WTC11 (cell line): ENCODE measurements at regions of chr20 and their contacts with region 1.

Region 1: DNA sequence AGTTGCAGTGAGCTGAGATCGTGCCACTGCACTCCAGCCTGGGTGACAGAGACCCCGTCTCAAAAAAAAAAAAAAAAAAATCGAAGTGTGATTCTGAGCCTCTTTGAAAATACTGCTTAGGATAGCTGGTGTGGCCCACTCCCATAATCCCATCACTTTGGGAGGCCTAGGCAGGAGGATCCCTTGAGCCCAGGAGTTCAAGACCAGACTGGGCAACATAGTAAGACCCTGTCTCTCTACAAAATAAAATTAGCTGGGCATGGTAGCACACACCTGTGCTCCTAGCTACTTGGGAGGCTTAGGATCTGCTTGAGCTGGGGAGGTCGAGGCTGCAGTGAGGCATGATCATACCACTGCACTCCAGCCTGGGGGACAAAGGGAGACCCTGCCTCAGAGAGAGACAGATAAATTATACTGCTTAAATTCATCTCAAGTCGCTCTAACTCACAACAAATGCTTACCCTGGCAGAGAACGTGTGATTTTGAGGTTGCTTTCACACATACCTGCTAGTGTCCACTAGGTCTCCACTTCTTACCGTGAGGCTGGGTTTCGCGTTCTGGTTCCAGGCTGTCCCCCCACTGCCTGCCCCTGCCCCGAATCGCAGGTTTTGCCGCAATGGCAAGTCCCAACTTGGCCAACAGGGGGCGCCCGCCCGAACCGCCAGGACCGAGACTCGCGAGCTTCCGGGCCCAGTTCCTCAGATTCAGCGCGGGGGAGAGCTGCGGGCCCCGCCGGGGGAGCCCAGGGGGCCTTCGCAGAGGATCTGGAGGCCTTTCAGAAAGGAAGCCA is 12.3 kb upstream of the TMC2 start:
- DNase-seq: peak; percentile 95
- ATAC-seq: peak; percentile 81
- H3K4me3 Mint-ChIP-seq: peak overlapping the region; percentile 91
- H3K27ac Mint-ChIP-seq: no peak overlapping the region
- H3K4me1 Mint-ChIP-seq: peaks cover 3% of the 10 kb centered on the region
- H3K27me3 Mint-ChIP-seq: peaks cover 88% of the 10 kb centered on the region
- CTCF ChIP-seq: peak; percentile 98

Region 2: GRCh38 chr20:2429061-2429460 is 95.1 kb before region 1 on chr20:
- CTCF ChIA-PET with region 1: no interaction called
- POLR2A ChIA-PET with region 1: no interaction called
- DNase-seq: no peak
- ATAC-seq: no peak
- H3K4me3 Mint-ChIP-seq: no peak overlapping the region
- H3K27ac Mint-ChIP-seq: no peak overlapping the region
- H3K4me1 Mint-ChIP-seq: no peaks in the 10 kb centered on the region
- H3K27me3 Mint-ChIP-seq: no peaks in the 10 kb centered on the region
- CTCF ChIP-seq: no peak

Region 3: GRCh38 chr20:2470423-2471193 is 53.5 kb before region 1 on chr20 and contains the start of gene SNRPB:
- CTCF ChIA-PET with region 1: interaction called, 14 read pairs
- POLR2A ChIA-PET with region 1: interaction called, 6 read pairs
- DNase-seq: peak; percentile 95
- ATAC-seq: peak; percentile 99
- H3K4me3 Mint-ChIP-seq: peak within 1 kb of the TSS; percentile 99
- H3K27ac Mint-ChIP-seq: peak within 1 kb of the TSS; percentile 100
- H3K4me1 Mint-ChIP-seq: peaks cover 38% of the 10 kb centered on the region
- H3K27me3 Mint-ChIP-seq: no peaks in the 10 kb centered on the region; the same call in 1 of the 2 replicates
- CTCF ChIP-seq: no peak
- total RNA-seq, gene SNRPB: 489 to 539 TPM (median 498 TPM) in 3 replicates

Region 4: GRCh38 chr20:2508631-2509467 is 15.3 kb before region 1 on chr20 and contains the start of gene ZNF343:
- CTCF ChIA-PET with region 1: interaction called, 27 read pairs
- POLR2A ChIA-PET with region 1: interaction called, 3 read pairs
- DNase-seq: peak; percentile 72
- ATAC-seq: peak; percentile 93
- H3K4me3 Mint-ChIP-seq: peak within 1 kb of the TSS; percentile 100
- H3K27ac Mint-ChIP-seq: peak within 1 kb of the TSS; percentile 91
- H3K4me1 Mint-ChIP-seq: peaks cover 7% of the 10 kb centered on the region
- H3K27me3 Mint-ChIP-seq: peaks cover 42% of the 10 kb centered on the region
- CTCF ChIP-seq: no peak
- total RNA-seq, gene ZNF343: 5.0 to 7.6 TPM (median 6.3 TPM) in 3 replicates

Region 5: DNA sequence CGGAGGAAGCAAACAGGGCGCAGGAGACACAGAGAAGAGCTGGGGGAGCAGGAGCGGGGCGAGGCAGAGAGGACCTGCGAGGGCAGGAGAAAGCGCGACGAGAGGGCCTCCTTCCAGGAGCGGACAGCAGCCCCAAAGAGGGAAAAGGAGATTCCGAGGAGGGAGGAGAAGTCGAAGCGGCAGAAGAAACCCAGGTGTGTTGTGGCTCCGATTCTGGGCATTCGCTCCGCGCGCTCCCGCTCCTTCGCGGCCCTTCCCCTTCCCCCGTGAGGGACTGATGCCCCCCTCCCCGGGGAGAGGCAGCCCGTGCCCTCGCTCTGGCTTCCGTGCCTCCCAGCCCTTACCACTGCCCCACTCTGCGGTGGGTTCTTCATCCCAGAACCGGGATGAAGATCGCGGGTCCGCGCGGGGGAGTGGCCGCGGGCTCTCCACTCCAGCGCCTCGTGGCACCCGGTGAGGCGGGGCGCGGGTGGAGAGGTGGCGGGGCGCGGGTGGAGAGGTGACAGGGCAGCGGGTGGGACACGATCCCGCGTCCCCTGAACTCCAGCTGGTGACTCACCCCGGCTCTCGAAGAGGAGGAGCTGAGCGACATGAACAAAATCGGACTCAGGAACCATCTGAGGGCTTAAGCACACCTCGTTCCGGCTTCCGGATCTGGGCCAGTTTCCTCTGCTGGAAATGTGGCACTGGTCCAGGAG is 34.6 kb after region 1 on chr20:
- CTCF ChIA-PET with region 1: interaction called, 10 read pairs
- POLR2A ChIA-PET with region 1: no interaction called
- DNase-seq: peak; percentile 24
- ATAC-seq: peak; percentile 66
- H3K4me3 Mint-ChIP-seq: peak overlapping the region; percentile 66
- H3K27ac Mint-ChIP-seq: no peak overlapping the region
- H3K4me1 Mint-ChIP-seq: peaks cover 7% of the 10 kb centered on the region
- H3K27me3 Mint-ChIP-seq: peaks cover 78% of the 10 kb centered on the region
- CTCF ChIP-seq: no peak

Region 6: GRCh38 chr20:2671977-2672376 is 147.9 kb after region 1 on chr20:
- CTCF ChIA-PET with region 1: interaction called, 11 read pairs
- POLR2A ChIA-PET with region 1: no interaction called
- DNase-seq: peak; percentile 66
- ATAC-seq: peak; percentile 94
- H3K4me3 Mint-ChIP-seq: no peak overlapping the region
- H3K27ac Mint-ChIP-seq: no peak overlapping the region
- H3K4me1 Mint-ChIP-seq: 0 out of 2 replicates have a peak, but pooled peaks cover 3% of the 10 kb centered on the region
- H3K27me3 Mint-ChIP-seq: peaks cover 32% of the 10 kb centered on the region
- CTCF ChIP-seq: peak; percentile 25; the same call in 1 of the 2 replicates